MCF 10A (cell line): ENCODE measurements at regions of chr9 and their contacts with region 1.

Region 1: DNA sequence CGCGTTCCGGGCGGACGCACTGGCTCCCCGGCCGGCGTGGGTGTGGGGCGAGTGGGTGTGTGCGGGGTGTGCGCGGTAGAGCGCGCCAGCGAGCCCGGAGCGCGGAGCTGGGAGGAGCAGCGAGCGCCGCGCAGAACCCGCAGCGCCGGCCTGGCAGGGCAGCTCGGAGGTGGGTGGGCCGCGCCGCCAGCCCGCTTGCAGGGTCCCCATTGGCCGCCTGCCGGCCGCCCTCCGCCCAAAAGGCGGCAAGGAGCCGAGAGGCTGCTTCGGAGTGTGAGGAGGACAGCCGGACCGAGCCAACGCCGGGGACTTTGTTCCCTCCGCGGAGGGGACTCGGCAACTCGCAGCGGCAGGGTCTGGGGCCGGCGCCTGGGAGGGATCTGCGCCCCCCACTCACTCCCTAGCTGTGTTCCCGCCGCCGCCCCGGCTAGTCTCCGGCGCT is at the start of gene DAPK1:
- DNase-seq: peak; percentile 12
- H3K4me3 Mint-ChIP-seq: peak within 1 kb of the TSS; percentile 73
- H3K27ac Mint-ChIP-seq: peak within 1 kb of the TSS; percentile 12
- H3K4me1 Mint-ChIP-seq: peaks cover 17% of the 10 kb centered on the region
- H3K27me3 Mint-ChIP-seq: no peaks in the 10 kb centered on the region
- CTCF ChIP-seq: no peak
- total RNA-seq, gene DAPK1: 19.7 and 35.7 TPM in 2 replicates

Region 2: GRCh38 chr9:87336914-87337333 is 160.7 kb before region 1 on chr9:
- CTCF ChIA-PET with region 1: interaction called, 9 read pairs
- POLR2A ChIA-PET with region 1: interaction called, 15 read pairs
- intact Hi-C with region 1: loop called (anchors 1 kb)
- DNase-seq: peak; percentile 83
- H3K4me3 Mint-ChIP-seq: peak overlapping the region; percentile 80
- H3K27ac Mint-ChIP-seq: peak overlapping the region; percentile 61
- H3K4me1 Mint-ChIP-seq: peaks cover 19% of the 10 kb centered on the region
- H3K27me3 Mint-ChIP-seq: no peaks in the 10 kb centered on the region
- CTCF ChIP-seq: peak; percentile 73

Region 3: DNA sequence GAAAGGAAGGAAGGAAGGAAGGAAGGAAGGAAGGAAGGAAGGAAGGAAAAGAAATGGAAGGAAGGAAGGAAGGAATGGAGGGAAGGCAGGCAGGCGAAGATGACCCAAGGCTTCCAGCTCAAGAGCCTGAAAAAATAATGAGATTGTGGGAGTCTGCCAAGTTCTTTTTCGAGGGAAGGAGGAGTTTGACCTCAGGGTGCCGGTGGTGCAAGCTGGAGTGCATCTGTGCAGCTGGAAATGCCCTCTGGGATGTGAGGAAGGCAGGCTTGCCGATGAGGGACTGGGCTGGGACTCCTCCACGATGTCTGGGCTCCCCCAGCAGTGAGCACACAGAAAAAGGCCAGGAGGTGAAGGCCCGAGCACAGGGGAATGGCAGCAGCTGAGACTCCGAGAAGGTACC is 154.9 kb before region 1 on chr9:
- CTCF ChIA-PET with region 1: interaction called, 9 read pairs
- POLR2A ChIA-PET with region 1: interaction called, 15 read pairs
- intact Hi-C with region 1: loop called (anchors 1 kb)
- DNase-seq: peak; percentile 54
- H3K4me3 Mint-ChIP-seq: peak overlapping the region; percentile 35
- H3K27ac Mint-ChIP-seq: no peak overlapping the region
- H3K4me1 Mint-ChIP-seq: peaks cover 37% of the 10 kb centered on the region
- H3K27me3 Mint-ChIP-seq: no peaks in the 10 kb centered on the region
- CTCF ChIP-seq: no peak